ENCODE measurements at regions of chr1 and their contacts with region 1.

Region 1: DNA sequence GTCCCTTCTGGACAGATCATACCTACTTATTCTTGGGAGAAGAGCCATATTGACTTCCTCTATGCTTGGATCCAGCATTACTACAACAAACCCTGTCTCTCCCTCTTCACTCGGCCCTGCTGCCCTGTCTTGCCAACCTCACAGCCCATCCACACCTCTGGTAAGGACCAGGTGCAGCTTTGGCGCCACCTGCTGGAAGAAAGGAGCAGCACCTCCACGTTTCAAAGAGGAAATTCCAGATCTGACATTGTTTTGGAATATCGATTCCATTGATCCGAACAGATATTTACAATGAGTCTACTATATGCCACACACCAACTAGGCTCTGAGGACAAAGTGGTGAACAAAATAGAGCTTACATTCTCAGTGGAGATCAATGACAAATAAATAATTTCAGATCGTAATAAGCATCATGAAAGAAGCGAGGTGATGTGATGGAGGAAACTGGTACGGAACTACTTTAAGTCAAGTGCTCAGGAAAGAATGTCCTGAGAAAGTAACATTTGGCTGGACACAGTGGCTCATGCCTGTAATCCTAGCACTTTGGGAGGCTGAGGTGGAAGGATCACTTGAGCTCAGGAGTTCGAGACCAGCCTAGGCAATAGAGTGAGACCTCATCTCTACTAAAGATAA is 18.7 kb downstream of the MFSD2A start:
- DNase-seq: peak; percentile 69 to 85 (median 78)
- H3K4me3 ChIP-seq: no peak overlapping the region
- H3K27ac ChIP-seq: no peak overlapping the region
- H3K4me1 ChIP-seq: no peaks in the 10 kb centered on the region
- H3K27me3 ChIP-seq: no peaks in the 10 kb centered on the region
- CTCF ChIP-seq: peak; percentile 98

Region 2: DNA sequence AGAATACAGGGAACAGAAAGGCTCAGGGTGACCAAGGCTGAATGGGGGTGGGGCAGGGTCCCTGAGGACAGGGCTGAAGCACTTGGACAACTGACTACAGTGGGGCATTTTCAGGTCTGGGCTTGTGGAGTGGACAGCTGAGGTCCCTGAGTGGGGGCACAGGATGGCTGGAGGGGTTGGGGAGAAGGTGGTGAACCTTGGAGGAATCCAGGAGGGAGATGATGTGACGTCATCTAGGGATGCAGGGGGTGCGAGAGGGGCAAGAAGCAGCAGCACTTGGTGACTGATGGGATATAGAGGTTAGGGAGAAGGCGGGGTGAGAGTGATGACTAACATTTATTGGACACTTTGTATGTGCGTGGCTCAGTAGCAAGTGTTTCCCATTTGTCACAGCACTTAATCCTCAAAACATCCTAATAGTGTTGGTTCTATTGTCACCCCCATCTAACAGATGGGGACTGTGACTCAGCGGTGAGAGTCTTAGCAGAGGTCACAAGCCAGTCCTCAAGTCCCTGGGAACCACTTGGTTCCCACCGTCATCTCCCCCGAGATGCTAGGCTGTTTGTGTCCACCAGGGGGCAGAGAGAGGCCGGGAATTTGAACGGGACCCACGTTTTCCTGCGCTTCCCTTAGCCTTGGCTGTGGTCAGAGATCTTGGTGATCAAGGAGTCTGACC is 157.1 kb before region 1 on chr1:
- intact Hi-C with region 1: loop called (anchors 5 kb)
- DNase-seq: peak; percentile 72 to 87 (median 83)
- H3K4me3 ChIP-seq: no peak overlapping the region
- H3K27ac ChIP-seq: no peak overlapping the region
- H3K4me1 ChIP-seq: no peaks in the 10 kb centered on the region
- H3K27me3 ChIP-seq: no peaks in the 10 kb centered on the region
- CTCF ChIP-seq: peak; percentile 96

Region 3: DNA sequence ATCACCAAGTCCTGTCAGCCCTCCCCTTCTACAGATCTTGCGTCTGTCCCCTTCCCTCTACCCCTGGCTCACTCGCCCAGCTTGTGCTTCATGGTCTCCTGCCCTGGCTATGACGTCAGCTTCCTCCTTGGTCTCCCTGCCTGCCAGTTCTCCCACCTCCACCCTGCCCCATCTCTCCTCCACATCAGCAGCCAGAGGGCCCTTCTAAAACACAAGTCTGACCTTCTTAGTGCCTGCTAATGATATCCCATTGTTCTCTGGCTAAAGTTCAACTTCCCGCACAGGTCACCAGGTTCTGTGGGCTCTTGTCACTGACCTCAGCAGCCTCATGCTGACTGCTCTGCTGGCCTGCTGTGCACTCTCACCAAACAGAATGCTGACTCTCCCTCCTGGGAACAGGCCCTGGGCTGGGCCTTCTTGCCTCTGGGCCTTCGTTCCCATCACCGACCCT is 47.3 kb before region 1 on chr1:
- intact Hi-C with region 1: loop called (anchors 10 kb)
- DNase-seq: peak in 3 of 5 donors; percentile 45 to 66 (median 66)
- H3K4me3 ChIP-seq: no peak overlapping the region
- H3K27ac ChIP-seq: peak overlapping the region; percentile 39 to 49
- H3K4me1 ChIP-seq: peaks cover 0 to 20% (median 11%) of the 10 kb centered on the region in 3 donors
- H3K27me3 ChIP-seq: no peaks in the 10 kb centered on the region
- CTCF ChIP-seq: no peak

Measured in kidney (tissue), 22 donors.